Posterior cingulate gyrus (tissue), 11 donors: ENCODE measurements at regions of chr11 and their contacts with region 1.

Region 1: DNA sequence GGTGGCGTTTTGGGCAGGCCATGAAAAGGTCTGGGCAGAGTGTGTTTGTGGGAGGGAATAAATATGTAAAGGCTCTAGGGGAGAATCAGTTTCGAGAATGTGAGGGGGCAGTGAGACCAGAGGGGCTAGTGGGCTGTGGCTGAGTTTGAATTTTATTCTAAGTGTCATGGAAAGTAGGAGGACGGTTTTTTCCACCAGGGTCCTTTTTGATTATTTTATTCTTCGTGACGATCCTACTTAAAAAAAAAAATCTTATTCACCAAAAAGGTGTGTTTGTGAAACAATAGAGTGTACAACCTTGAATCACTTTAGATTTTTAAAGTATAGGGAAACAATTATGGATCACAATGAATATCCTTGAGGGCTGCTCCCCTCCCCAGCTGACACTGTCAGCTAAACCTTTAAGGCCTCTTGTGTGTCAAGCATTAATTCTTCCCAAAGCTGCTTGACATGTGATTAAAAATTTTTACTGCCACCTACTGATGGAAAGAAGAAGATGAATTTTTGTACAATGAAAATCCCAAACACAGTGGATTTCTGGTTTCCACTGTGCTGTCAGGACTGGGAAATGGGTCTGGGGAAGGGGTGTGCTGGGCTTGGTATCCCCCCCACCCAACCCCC is 107.5 kb upstream of the OR4B1 start:
- DNase-seq: no peak

Region 2: GRCh38 chr11:47858169-47858543 is 251.0 kb before region 1 on chr11:
- intact Hi-C with region 1: loop called (anchors 10 kb)
- DNase-seq: no peak

Region 3: GRCh38 chr11:47932544-47932943 is 176.6 kb before region 1 on chr11:
- intact Hi-C with region 1: loop called (anchors 1 kb)
- DNase-seq: no peak

Region 4: GRCh38 chr11:47980245-47981049 is 128.7 kb before region 1 on chr11 and contains the start of gene PTPRJ:
- intact Hi-C with region 1: loop called (anchors 2 kb)
- DNase-seq: peak; percentile 46 to 94 (median 70)

Region 5: DNA sequence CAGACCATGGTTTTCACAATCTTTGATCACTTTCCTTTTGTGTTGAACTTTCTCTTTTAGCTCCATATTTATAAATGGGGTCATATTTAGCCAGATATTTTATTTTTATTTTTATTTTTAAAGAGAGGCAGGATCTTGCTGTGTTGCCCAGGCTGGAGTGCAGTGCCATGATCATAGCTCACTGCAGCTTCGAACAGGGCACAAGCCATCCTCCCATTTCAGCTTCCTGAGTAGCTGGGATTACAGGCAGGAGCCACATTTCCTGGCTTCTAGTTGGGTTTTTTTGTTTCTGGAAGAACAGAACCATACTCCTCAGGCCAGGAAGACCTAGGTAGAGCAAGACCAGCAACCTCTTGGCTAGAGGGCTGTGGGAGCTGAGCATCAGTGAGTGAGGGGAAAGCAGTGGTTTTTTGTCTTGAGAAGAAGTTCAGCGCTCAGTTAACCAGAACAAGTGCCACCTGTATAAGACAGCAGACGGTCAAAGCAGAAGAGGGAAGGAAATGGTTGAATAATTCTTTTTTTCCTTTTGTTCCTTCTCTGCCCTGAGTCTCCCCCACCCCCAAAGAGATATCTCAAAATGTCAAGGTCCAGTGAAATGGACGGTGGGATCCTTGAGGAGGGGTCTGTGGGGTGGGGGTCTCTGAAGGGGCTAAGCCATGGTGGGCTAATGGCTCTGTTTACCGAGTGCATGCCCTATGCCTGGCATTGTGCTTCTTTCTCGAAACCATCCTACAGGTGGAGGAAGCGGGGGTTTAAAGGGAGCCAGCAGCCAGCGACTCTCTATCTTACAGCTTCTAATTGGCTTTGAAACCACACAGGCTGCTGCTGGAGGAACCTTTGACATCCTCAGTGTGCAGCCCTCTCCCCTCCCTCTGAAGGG is 65.8 kb before region 1 on chr11:
- intact Hi-C with region 1: loop called (anchors 5 kb)
- DNase-seq: peak in 1 of 10 donors; percentile 24

Region 6: GRCh38 chr11:48261600-48261999 is 152.4 kb after region 1 on chr11:
- intact Hi-C with region 1: no loop called
- DNase-seq: no peak